ENCODE measurements at regions of chr14 and their contacts with region 1.

Region 1: DNA sequence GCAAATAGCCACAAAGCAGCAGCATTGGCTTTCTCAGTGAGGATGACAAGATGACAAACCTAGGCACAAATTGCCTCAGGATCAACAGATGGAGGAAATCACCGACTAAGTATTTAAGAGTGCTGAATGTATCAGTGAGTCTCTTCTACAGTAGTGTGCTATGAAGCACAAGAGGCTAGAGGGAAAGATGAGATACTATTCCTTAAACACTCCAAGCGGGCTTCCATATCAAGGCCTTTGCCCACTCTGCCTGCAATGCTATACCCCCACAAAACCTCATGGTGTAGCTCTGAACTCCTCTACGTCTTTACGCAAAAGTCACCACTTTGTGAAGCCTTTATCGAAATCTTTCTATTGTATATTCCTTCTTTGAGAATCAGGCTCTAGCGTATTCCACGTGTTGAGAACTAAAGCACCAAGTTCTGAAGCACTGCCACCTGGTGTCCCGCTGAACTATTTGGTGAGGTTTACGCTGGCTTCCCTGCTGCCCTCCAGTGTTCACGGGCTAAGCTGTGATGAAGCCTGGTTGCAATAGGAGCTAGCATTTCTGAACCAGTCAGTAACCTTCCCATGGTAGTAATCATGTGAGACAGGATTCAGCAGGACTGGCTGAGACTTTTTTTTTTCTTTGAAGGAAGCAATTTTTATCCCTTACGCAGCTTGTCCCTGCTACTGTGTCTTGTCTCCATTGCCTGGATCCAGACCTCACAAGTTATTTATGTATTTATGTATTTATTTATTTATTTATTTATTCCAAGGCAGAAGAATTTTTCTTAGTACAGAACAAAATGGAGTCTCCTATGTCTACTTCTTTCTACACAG is 426.5 kb upstream of the OR4E1 start:
- DNase-seq: peak; percentile 79
- ATAC-seq: peak; percentile 67
- H3K4me3 Mint-ChIP-seq: no peak overlapping the region
- H3K27ac Mint-ChIP-seq: peak overlapping the region; percentile 38
- H3K4me1 Mint-ChIP-seq: peaks cover 48% of the 10 kb centered on the region
- H3K27me3 Mint-ChIP-seq: no peaks in the 10 kb centered on the region
- CTCF ChIP-seq: peak; percentile 39

Region 2: DNA sequence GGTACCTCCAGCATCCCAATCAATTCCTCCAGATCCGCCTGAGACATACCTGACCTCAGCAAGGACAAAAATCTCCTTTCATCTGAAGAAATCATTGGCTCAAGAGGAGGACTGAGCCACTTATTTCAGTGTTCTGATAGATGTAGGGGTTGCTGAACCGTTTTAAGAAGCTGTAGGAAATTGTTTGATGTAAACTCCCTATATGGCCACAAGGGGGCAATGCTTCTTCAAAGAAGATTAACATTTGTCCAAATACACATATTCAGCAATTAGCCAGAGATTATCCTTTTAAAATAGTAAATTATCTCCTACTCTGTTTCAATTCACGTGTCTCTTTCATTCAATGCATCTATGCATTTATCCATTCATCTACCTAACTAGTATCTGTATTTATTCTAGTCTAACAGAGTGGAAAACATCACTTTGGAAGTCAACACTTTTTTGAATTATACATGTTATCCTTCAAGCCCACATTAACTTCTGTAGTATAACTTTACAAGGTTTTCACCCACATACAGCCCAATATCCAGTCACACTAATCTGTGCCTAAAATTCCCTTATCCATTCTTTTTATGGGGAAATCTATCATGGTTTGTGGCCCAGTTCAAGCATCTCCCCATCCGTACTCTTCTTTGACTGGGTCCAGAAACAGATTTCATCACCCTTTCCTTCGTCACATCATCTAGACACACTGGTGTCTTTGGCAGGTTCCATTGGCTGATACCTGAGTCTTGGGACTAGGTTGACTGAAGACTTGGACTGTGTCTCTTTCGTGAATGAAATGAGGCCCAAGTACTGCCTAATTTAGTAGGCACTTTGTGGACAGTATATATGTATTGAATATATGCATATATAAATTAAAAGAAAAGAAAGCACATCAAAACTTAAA is 15.5 kb before region 1 on chr14:
- CTCF ChIA-PET with region 1: interaction called, 18 read pairs
- POLR2A ChIA-PET with region 1: no interaction called
- intact Hi-C with region 1: loop called (anchors 2 kb)
- DNase-seq: peak; percentile 31
- ATAC-seq: peak; percentile 71
- H3K4me3 Mint-ChIP-seq: peak overlapping the region; percentile 67
- H3K27ac Mint-ChIP-seq: peak overlapping the region; percentile 87
- H3K4me1 Mint-ChIP-seq: peaks cover 26% of the 10 kb centered on the region
- H3K27me3 Mint-ChIP-seq: no peaks in the 10 kb centered on the region
- CTCF ChIP-seq: peak; percentile 50

Measured in activated CD8-positive, alpha-beta T cell treated with anti-CD3 and anti-CD28 coated beads for 36 hours (primary cell).